AG04449 (cell line): ENCODE measurements at regions of chr7 and their contacts with region 1.

Region 1: GRCh38 chr7:141785706-141786552 is 4.1 kb upstream of the TAS2R5 start:
- DNase-seq: peak; percentile 5
- H3K4me3 ChIP-seq: no peak overlapping the region
- CTCF ChIP-seq: peak; percentile 64

Region 2: GRCh38 chr7:141763797-141764196 is 22.1 kb before region 1 on chr7 and contains the start of gene TAS2R3:
- CTCF ChIA-PET with region 1: interaction called, 12 read pairs
- POLR2A ChIA-PET with region 1: no interaction called
- DNase-seq: no peak
- H3K4me3 ChIP-seq: no peak within 1 kb of the TSS
- CTCF ChIP-seq: no peak